MCF 10A (cell line): ENCODE measurements at regions of chr14 and their contacts with region 1.

Region 1: GRCh38 chr14:26984311-26985177 is 386.7 kb upstream of the NOVA1 start:
- DNase-seq: peak; percentile 71
- H3K4me3 Mint-ChIP-seq: no peak overlapping the region
- H3K27ac Mint-ChIP-seq: no peak overlapping the region
- H3K4me1 Mint-ChIP-seq: peaks cover 12% of the 10 kb centered on the region
- H3K27me3 Mint-ChIP-seq: peaks cover 23% of the 10 kb centered on the region
- CTCF ChIP-seq: peak; percentile 76

Region 2: DNA sequence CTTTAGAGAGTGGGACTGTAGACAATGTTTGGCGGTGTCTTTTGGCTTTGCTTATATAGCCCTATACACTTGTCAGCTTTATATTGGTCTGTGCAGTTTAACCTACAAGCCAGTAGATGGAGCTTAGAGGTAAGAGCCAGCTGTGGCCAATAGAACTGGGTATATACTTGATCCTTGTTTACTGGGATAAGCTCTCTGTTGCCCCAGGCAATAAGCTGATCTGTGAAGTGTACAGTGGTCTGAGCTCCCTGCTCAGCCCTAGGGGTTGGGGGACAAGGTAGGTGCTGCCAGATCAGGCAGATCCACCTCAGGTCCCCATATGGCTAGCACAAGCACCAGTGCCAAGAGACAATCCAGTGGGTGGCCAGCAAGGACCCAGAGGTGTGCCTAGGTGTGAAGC is 820.8 kb before region 1 on chr14:
- CTCF ChIA-PET with region 1: interaction called, 3 read pairs
- POLR2A ChIA-PET with region 1: no interaction called
- intact Hi-C with region 1: loop called (anchors 10 kb)
- DNase-seq: no peak
- H3K4me3 Mint-ChIP-seq: no peak overlapping the region
- H3K27ac Mint-ChIP-seq: no peak overlapping the region
- H3K4me1 Mint-ChIP-seq: no peaks in the 10 kb centered on the region
- H3K27me3 Mint-ChIP-seq: no peaks in the 10 kb centered on the region
- CTCF ChIP-seq: peak; percentile 32

Region 3: DNA sequence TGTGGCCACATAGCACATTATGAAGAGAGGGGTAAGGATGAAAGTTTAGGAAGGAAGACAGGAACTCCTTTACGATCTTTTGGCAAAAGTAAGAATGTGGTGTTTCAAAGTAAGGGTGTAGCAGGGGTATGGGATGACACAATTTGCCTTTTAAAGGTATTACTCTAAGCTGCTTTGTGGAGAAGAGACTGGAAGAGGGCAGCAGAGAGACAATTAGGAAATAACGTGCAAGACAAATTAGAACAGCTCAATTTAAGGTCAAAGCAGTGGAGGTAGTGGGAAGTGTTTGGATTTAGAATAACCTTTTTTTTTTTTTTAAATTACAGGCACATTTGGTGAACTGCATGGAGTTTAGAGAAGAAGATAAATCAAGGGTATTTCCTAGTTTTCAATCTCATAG is 729.3 kb before region 1 on chr14:
- CTCF ChIA-PET with region 1: interaction called, 6 read pairs
- POLR2A ChIA-PET with region 1: interaction called, 3 read pairs
- intact Hi-C with region 1: loop called (anchors 1 kb)
- DNase-seq: peak; percentile 8
- H3K4me3 Mint-ChIP-seq: no peak overlapping the region
- H3K27ac Mint-ChIP-seq: no peak overlapping the region
- H3K4me1 Mint-ChIP-seq: no peaks in the 10 kb centered on the region
- H3K27me3 Mint-ChIP-seq: peaks cover 10% of the 10 kb centered on the region
- CTCF ChIP-seq: no peak

Region 4: DNA sequence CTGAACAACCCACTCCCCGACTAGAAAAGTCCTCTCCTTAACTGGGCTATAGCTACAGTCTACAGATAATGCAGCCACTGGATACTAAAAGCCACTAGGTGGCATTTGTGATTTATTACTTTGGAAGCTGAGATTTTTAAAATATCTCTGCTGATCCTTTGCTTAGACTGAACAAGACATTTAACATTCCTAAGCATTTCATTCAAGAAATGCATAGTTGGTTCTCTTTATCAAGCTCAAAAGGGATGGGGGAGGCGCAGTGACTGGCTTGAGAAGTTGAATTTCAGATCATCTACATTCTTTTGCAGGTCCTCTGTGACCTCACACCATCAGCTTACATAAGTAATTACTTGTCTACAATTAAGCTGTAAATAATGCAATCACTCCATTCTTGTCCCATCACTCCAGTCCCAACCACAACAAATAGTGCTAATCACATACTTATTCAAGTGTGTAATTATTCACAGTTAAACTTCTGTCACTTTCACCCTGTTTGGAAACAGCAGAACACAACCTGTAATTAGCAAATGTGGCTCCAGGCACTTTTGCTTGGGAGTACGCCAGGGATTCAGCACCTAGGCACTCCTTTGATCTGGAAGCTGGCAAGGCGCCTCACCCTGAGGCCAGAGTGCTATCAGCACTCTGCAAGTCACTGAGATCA is 590.3 kb before region 1 on chr14:
- CTCF ChIA-PET with region 1: interaction called, 23 read pairs
- POLR2A ChIA-PET with region 1: no interaction called
- intact Hi-C with region 1: loop called (anchors 1 kb)
- DNase-seq: peak; percentile 1
- H3K4me3 Mint-ChIP-seq: no peak overlapping the region
- H3K27ac Mint-ChIP-seq: no peak overlapping the region
- H3K4me1 Mint-ChIP-seq: peaks cover 8% of the 10 kb centered on the region
- H3K27me3 Mint-ChIP-seq: peaks cover 11% of the 10 kb centered on the region
- CTCF ChIP-seq: peak; percentile 19

Region 5: DNA sequence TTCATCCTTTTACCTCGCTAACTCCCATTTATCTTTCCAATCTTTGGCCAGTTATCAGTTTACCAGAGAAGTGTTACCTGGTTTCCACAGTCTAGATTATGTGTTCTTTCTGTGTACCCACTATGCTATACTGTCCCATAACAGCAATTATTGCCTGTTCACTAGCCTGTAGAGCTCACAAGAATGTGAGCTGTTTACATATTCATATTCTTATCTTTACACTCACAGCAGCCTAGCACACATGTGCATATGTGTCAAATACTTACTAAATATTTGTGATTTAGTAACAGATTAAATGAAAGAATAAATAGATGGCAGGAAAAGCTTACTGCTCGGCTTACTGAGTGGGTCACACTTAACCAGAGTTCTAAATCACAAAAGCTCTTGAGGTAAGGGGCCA is 484.5 kb before region 1 on chr14:
- CTCF ChIA-PET with region 1: interaction called, 3 read pairs
- POLR2A ChIA-PET with region 1: no interaction called
- intact Hi-C with region 1: loop called (anchors 10 kb)
- DNase-seq: no peak
- H3K4me3 Mint-ChIP-seq: no peak overlapping the region
- H3K27ac Mint-ChIP-seq: no peak overlapping the region
- H3K4me1 Mint-ChIP-seq: no peaks in the 10 kb centered on the region
- H3K27me3 Mint-ChIP-seq: peaks cover 40% of the 10 kb centered on the region
- CTCF ChIP-seq: no peak

Region 6: GRCh38 chr14:26963696-26964095 is 20.8 kb before region 1 on chr14:
- CTCF ChIA-PET with region 1: interaction called, 12 read pairs
- POLR2A ChIA-PET with region 1: no interaction called
- intact Hi-C with region 1: no loop called
- DNase-seq: peak; percentile 39
- H3K4me3 Mint-ChIP-seq: no peak overlapping the region
- H3K27ac Mint-ChIP-seq: no peak overlapping the region
- H3K4me1 Mint-ChIP-seq: no peaks in the 10 kb centered on the region
- H3K27me3 Mint-ChIP-seq: peaks cover 17% of the 10 kb centered on the region
- CTCF ChIP-seq: no peak

Region 7: DNA sequence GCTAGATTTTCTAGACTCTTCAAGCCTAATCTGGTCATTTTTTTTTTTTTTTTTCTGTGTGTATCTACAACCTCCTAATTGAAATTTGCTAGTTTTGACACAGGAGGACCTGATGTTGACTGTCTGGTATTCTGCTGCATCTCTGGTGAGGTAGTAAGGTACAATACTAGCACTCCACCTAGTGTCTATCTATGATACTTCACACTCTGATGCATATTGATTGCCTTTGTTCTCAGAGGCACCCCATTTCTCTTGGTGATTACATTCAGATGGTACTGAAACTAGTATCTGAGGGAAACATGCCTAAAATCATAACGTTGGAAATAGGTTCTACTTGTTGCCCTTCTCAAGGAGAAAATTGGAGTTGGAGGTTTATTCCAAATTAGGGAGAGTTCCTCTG is 543.8 kb after region 1 on chr14:
- CTCF ChIA-PET with region 1: interaction called, 5 read pairs
- POLR2A ChIA-PET with region 1: no interaction called
- intact Hi-C with region 1: loop called (anchors 2 kb)
- DNase-seq: peak; percentile 57
- H3K4me3 Mint-ChIP-seq: no peak overlapping the region
- H3K27ac Mint-ChIP-seq: no peak overlapping the region
- H3K4me1 Mint-ChIP-seq: no peaks in the 10 kb centered on the region
- H3K27me3 Mint-ChIP-seq: peaks cover 9% of the 10 kb centered on the region
- CTCF ChIP-seq: peak; percentile 66

Region 8: DNA sequence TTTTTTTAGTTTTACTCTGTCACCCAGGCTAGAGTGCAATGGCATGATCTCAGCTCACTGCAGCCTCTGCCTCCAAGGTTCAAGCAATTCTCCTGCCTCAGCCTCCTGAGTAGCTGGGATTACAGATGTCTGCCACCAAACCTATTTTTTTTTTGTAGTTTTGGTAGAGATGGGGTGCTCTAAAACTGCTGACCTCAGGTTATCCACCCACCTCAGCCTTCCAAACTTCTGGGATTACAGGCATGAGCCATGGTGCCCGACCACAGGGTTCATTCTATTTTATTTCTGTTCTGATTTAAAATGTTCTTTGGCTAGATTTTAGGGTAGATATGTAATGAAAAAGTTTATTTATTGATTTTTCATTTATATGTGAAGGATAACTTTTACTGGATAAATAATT is 676.1 kb after region 1 on chr14:
- CTCF ChIA-PET with region 1: no interaction called
- POLR2A ChIA-PET with region 1: no interaction called
- intact Hi-C with region 1: no loop called
- DNase-seq: no peak
- H3K4me3 Mint-ChIP-seq: no peak overlapping the region
- H3K27ac Mint-ChIP-seq: no peak overlapping the region
- H3K4me1 Mint-ChIP-seq: no peaks in the 10 kb centered on the region
- H3K27me3 Mint-ChIP-seq: peaks cover 15% of the 10 kb centered on the region
- CTCF ChIP-seq: no peak